WTC11 (cell line): ENCODE measurements at regions of chr12 and their contacts with region 1.

Region 1: GRCh38 chr12:11202811-11203210 is 16.1 kb upstream of the TAS2R42 start:
- DNase-seq: no peak
- ATAC-seq: no peak
- H3K4me3 Mint-ChIP-seq: no peak overlapping the region
- H3K27ac Mint-ChIP-seq: no peak overlapping the region
- H3K4me1 Mint-ChIP-seq: peaks cover 8% of the 10 kb centered on the region
- H3K27me3 Mint-ChIP-seq: no peaks in the 10 kb centered on the region; the same call in 1 of the 2 replicates
- CTCF ChIP-seq: no peak

Region 2: GRCh38 chr12:10749700-10750384 is 453.0 kb before region 1 on chr12:
- CTCF ChIA-PET with region 1: interaction called, 10 read pairs
- POLR2A ChIA-PET with region 1: no interaction called
- DNase-seq: peak; percentile 66
- ATAC-seq: peak; percentile 95
- H3K4me3 Mint-ChIP-seq: peak overlapping the region; percentile 66
- H3K27ac Mint-ChIP-seq: no peak overlapping the region
- H3K4me1 Mint-ChIP-seq: no peaks in the 10 kb centered on the region
- H3K27me3 Mint-ChIP-seq: peaks cover 9% of the 10 kb centered on the region
- CTCF ChIP-seq: peak; percentile 66

Region 3: GRCh38 chr12:10771132-10771733 is 431.6 kb before region 1 on chr12:
- CTCF ChIA-PET with region 1: interaction called, 66 read pairs
- POLR2A ChIA-PET with region 1: no interaction called
- DNase-seq: no peak
- ATAC-seq: no peak
- H3K4me3 Mint-ChIP-seq: no peak overlapping the region
- H3K27ac Mint-ChIP-seq: no peak overlapping the region
- H3K4me1 Mint-ChIP-seq: no peaks in the 10 kb centered on the region
- H3K27me3 Mint-ChIP-seq: peaks cover 6% of the 10 kb centered on the region
- CTCF ChIP-seq: peak; percentile 37

Region 4: GRCh38 chr12:10909462-10909861 is 293.3 kb before region 1 on chr12 and contains the start of gene TAS2R13:
- CTCF ChIA-PET with region 1: no interaction called
- POLR2A ChIA-PET with region 1: no interaction called
- DNase-seq: no peak
- ATAC-seq: no peak
- H3K4me3 Mint-ChIP-seq: no peak within 1 kb of the TSS
- H3K27ac Mint-ChIP-seq: no peak within 1 kb of the TSS
- H3K4me1 Mint-ChIP-seq: peaks cover 9% of the 10 kb centered on the region
- H3K27me3 Mint-ChIP-seq: no peaks in the 10 kb centered on the region
- CTCF ChIP-seq: no peak
- total RNA-seq, gene TAS2R13: 0.37 to 0.62 TPM (median 0.37 TPM) in 3 replicates

Region 5: DNA sequence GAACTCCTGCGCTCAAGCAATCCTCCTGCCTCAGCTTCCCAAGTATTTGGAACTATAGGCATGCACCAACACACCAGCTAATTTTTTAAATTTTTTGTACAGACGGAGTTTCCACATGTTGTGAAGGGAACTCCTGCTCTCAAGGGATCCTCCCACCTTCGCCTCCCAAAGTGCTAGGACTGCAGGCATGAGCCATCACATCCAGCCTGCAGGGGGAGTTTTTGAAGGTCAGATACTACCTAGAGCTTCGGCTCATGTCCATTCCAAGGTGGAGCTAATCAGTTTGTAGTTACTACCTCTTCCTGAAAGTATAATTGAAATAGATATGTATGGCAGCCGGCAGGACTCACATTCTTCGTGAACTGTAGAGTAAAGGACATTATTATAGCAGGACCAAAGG is 176.7 kb before region 1 on chr12:
- CTCF ChIA-PET with region 1: interaction called, 13 read pairs
- POLR2A ChIA-PET with region 1: no interaction called
- DNase-seq: peak; percentile 63
- ATAC-seq: peak; percentile 98
- H3K4me3 Mint-ChIP-seq: no peak overlapping the region
- H3K27ac Mint-ChIP-seq: no peak overlapping the region
- H3K4me1 Mint-ChIP-seq: no peaks in the 10 kb centered on the region
- H3K27me3 Mint-ChIP-seq: no peaks in the 10 kb centered on the region
- CTCF ChIP-seq: peak; percentile 45; the same call in 1 of the 2 replicates

Region 6: GRCh38 chr12:11171145-11171968 is 31.5 kb before region 1 on chr12 and contains the start of gene SMIM10L1:
- CTCF ChIA-PET with region 1: interaction called, 18 read pairs
- POLR2A ChIA-PET with region 1: no interaction called
- DNase-seq: peak; percentile 88
- ATAC-seq: peak; percentile 99
- H3K4me3 Mint-ChIP-seq: peak within 1 kb of the TSS; percentile 98
- H3K27ac Mint-ChIP-seq: peak within 1 kb of the TSS; percentile 99
- H3K4me1 Mint-ChIP-seq: peaks cover 58% of the 10 kb centered on the region
- H3K27me3 Mint-ChIP-seq: no peaks in the 10 kb centered on the region
- CTCF ChIP-seq: no peak
- total RNA-seq, gene SMIM10L1: 11.8 to 12.3 TPM (median 12.2 TPM) in 3 replicates

Region 7: GRCh38 chr12:11186837-11187236 is 16.0 kb before region 1 on chr12 and contains the start of gene TAS2R42:
- CTCF ChIA-PET with region 1: interaction called, 11 read pairs
- POLR2A ChIA-PET with region 1: no interaction called
- DNase-seq: no peak
- ATAC-seq: no peak
- H3K4me3 Mint-ChIP-seq: no peak within 1 kb of the TSS
- H3K27ac Mint-ChIP-seq: no peak within 1 kb of the TSS
- H3K4me1 Mint-ChIP-seq: peaks cover 21% of the 10 kb centered on the region
- H3K27me3 Mint-ChIP-seq: no peaks in the 10 kb centered on the region
- CTCF ChIP-seq: no peak
- total RNA-seq, gene TAS2R42: not detected in 3 replicates

Region 8: DNA sequence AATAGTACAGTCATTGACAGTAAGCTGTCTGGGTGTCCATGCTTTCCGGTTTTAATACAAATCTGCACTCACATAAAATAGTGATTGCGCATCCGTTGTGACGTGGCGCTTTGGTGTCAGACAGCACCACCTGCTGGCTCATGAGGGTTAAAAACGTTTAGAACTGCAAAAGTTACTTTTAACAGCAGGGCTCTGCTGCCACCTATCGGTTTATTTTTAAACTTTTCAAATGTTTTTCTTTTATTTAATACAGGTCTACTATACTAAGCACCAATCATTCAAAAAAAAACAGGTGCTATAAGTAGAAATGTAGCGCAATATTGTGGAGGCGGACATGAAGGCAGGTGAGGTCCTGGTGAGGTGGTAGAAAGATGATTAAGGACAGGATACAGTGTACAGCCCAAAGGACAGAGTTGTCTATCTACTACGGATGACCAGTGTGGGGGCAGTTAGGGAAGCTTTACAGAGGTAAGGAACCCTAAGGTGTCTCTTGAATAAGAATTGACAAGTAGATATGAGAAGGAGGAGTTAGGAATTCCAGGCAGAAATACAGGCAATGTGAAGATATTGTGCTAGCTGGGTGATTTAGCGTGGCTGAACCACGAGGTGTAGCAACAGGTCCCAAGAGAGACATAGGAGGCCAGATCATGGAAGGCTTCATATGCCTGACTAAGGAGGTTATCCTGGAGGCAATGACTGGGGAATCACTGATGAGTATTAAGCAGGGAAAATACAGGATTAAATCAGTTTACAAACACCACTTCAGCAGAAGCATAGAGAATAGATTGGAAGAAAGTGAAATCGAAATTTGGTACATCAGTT is 284.0 kb after region 1 on chr12:
- CTCF ChIA-PET with region 1: interaction called, 15 read pairs
- POLR2A ChIA-PET with region 1: no interaction called
- DNase-seq: peak; percentile 69
- ATAC-seq: peak; percentile 55
- H3K4me3 Mint-ChIP-seq: no peak overlapping the region
- H3K27ac Mint-ChIP-seq: no peak overlapping the region
- H3K4me1 Mint-ChIP-seq: peaks cover 13% of the 10 kb centered on the region
- H3K27me3 Mint-ChIP-seq: no peaks in the 10 kb centered on the region; the same call in 1 of the 2 replicates
- CTCF ChIP-seq: peak; percentile 96